Activated CD8-positive, alpha-beta T cell treated with anti-CD3 and anti-CD28 coated beads, Interleukin-2, amount 10 ng/mL, durations not matched to agents 7 days and 5 days (primary cell): ENCODE measurements at regions of chr6 and their contacts with region 1.

Region 1: DNA sequence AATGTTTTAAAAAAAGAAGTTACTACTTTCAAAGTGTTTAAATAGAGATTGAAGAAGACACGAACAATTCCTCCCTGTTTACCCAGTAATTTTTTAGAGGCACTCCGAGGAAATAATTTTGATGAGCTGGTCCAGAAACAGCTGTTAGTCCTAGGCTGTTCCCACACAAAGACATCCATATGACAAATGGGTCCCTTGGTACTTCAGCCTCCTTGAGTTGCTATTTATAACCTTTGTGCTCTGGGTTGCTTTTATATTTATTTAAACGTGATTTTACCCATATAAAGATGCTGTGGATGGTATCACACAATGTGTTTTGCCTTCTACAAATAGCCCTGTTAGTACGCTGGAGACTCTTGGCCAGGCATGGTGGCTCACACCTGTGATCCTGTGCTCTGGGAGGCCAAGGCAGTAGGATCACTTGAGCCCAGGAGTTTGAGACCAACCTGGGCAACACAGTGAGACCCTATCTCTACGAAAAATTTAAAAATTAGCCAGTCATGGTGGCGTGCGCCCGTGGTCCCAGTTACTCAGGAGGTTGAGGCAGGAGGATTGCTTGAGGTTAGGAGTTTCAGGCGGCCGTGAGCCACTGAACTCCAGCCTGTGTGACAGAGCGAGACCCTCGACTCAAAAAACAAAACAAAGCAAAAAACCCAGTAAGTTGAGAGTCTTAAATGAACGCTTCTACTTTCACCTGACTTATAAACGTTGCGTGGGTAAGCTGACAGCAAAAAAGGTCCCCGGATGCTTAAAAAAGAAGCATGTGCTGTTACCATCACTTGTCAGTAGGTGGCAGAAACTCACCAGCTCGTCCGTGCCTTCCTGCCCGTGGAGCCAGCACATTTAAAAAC is 56.9 kb upstream of the ARMH2 start:
- DNase-seq: peak; percentile 84
- ATAC-seq: peak; percentile 49
- H3K4me3 Mint-ChIP-seq: no peak overlapping the region
- H3K27ac Mint-ChIP-seq: peak overlapping the region; percentile 64
- H3K4me1 Mint-ChIP-seq: peaks cover 52% of the 10 kb centered on the region
- H3K27me3 Mint-ChIP-seq: no peaks in the 10 kb centered on the region

Region 2: DNA sequence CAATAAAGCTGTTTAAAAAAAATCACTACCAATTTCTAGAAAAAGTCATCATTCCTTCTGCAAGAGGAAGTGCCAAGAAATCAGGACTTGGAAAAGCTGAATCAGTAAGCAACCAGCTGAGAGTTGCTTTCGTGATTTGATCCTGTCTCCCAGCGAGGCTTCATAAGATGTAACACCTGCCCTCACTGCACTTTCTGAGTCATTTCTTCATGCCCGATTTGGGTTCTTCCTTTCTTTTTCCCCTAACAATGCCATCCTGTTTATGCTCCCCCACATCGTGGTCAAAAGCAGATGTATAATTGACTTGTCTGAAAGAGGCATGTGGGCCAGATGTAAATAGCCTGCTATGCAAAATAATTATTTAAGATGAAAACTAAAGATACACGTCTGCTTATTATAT is 28.0 kb after region 1 on chr6:
- CTCF ChIA-PET with region 1: interaction called, 13 read pairs
- POLR2A ChIA-PET with region 1: interaction called, 3 read pairs
- DNase-seq: no peak
- ATAC-seq: peak; percentile 74
- H3K4me3 Mint-ChIP-seq: peak overlapping the region; percentile 10
- H3K27ac Mint-ChIP-seq: peak overlapping the region; percentile 36
- H3K4me1 Mint-ChIP-seq: peaks cover 64% of the 10 kb centered on the region
- H3K27me3 Mint-ChIP-seq: no peaks in the 10 kb centered on the region

Region 3: GRCh38 chr6:24919004-24919892 is 63.6 kb after region 1 on chr6:
- CTCF ChIA-PET with region 1: interaction called, 64 read pairs
- POLR2A ChIA-PET with region 1: interaction called, 5 read pairs
- DNase-seq: peak; percentile 44
- ATAC-seq: peak; percentile 50
- H3K4me3 Mint-ChIP-seq: peak overlapping the region; percentile 53
- H3K27ac Mint-ChIP-seq: peak overlapping the region; percentile 62
- H3K4me1 Mint-ChIP-seq: peaks cover 86% of the 10 kb centered on the region
- H3K27me3 Mint-ChIP-seq: no peaks in the 10 kb centered on the region

Region 4: DNA sequence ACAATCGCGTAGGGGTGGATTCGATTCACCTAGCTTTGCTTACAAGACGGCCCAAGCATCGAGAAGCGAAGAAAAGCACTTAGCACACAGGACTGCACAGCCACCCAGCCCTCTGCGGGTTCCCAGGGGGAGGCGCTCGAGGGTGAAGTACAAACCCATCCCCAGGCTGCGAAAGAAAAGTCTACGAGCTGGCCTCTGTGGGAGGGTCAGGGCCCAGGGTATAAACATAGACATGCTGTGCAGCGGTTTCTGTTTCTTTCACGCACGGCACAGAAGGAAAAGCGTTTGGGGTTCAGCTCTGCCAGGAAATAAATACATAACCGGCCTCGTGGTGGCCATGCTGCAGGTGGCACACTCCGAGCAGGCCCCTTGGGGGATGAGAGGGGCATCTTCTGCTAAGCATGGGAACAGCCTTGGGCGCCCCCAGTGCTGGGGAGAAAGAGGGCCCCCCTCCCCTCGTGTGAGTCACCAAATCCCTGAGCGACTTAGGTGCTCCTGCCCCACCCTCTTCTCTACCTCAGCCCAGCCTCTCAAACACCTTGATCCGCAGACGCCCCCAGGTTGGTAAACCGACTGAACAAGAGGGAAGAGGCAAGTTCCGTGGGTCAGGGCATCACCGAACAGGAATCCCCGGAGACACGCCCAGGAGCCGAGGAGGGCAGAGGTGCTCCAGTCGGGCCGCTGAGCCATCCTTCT is 171.7 kb after region 1 on chr6:
- CTCF ChIA-PET with region 1: interaction called, 59 read pairs
- POLR2A ChIA-PET with region 1: interaction called, 3 read pairs
- DNase-seq: peak; percentile 88
- ATAC-seq: peak; percentile 97
- H3K4me3 Mint-ChIP-seq: peak overlapping the region; percentile 65
- H3K27ac Mint-ChIP-seq: peak overlapping the region; percentile 81
- H3K4me1 Mint-ChIP-seq: peaks cover 48% of the 10 kb centered on the region
- H3K27me3 Mint-ChIP-seq: no peaks in the 10 kb centered on the region

Region 5: DNA sequence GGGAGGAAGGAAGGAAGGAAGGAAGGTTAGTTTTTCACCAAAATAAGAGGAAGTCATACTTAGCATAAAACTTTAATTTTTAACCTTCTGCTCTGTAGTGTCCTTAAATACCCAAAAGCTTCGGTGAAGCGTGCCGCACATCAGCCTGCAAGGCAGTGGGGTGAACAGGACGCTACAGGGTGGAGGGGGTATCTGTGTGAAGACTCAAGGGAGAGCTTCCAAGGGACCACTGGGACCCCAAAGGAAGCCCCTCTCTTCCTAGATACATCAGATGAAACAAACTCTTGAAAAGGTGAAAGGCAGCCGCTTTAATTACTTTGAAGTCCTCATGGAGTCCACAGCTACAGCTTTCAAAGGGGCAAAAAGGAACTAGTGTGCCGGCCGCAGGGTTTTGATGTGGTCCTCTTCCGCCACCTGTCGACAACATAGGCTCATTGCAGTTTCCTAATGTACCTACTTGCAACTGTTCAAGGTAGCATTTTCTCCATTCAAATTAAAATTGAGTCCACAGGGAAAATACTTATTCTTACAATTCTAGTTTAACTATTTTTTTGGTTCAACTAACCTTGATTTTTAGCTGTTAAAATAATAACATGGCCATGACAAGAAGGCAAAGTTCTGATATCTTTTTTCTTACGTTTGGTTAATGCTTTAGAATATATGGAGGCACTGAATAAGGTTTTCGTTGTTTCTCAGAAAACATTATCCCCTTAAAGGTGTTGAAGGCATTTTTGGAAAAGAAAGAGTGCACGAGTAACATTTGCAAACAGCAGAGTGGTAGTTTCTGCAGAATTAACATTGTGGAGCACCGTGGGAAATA is 215.1 kb after region 1 on chr6:
- CTCF ChIA-PET with region 1: interaction called, 22 read pairs
- POLR2A ChIA-PET with region 1: no interaction called
- DNase-seq: peak; percentile 90
- ATAC-seq: peak; percentile 95
- H3K4me3 Mint-ChIP-seq: peak overlapping the region; percentile 53
- H3K27ac Mint-ChIP-seq: peak overlapping the region; percentile 91
- H3K4me1 Mint-ChIP-seq: peaks cover 7% of the 10 kb centered on the region
- H3K27me3 Mint-ChIP-seq: peaks cover 3% of the 10 kb centered on the region